ENCODE measurements at regions of chr3 and their contacts with region 1.

Region 1: GRCh38 chr3:81666493-81667121 is 94.8 kb downstream of the GBE1 start:
- DNase-seq: peak; percentile 37
- CTCF ChIP-seq: peak; percentile 55

Region 2: GRCh38 chr3:81776643-81777042 is 110.0 kb after region 1 on chr3:
- in situ Hi-C with region 1: no loop called
- DNase-seq: no peak
- CTCF ChIP-seq: no peak

Region 3: GRCh38 chr3:82133070-82133606 is 466.5 kb after region 1 on chr3:
- in situ Hi-C with region 1: loop called (anchors 25 kb)
- DNase-seq: peak; percentile 39
- CTCF ChIP-seq: peak; percentile 61